Dendritic cell treated with granulocyte-macrophage colony-stimulating factor and Interleukin-4, amounts not matched to agents 40 ng/mL and 50 ng/mL, for 4 days (primary cell): ENCODE measurements at regions of chr12 and their contacts with region 1.

Region 1: DNA sequence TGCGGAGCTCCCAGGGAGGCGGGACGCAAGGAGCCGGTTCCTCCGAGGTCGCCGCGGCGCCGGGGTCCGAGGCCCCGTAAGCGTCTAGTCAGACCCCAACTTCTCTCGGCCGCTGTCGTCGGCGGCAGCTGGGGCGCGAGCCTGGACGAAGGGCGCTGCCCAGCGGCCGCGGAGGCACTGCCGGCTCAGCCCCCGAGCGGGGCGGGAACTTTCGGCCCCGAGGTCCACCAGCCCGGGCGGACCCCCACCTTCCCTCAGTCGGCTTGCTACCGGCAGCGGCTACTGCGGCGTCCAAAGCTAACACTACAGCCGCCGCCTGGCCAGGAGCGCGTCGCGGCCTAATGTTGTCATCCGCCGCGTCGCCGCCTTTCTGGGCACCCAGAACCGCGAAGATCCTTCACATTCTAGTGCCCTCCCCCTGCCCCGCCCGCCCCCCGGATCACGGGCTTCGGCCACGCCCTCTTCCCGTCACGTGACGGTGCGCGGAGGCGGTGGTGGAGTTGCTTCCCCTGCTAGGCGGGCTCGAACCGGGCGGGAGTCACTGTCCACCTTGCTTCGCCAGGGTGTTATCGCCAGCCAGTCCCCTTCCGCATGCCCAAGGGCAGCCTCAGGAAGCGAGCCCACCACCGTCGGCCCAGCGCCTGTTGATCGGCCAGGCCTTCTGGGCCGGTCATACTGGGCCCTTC is at the start of gene OSBPL8:
- H3K4me3 Mint-ChIP-seq: peak within 1 kb of the TSS; percentile 91
- H3K27ac Mint-ChIP-seq: peak within 1 kb of the TSS; percentile 96
- H3K4me1 Mint-ChIP-seq: peaks cover 29% of the 10 kb centered on the region
- H3K27me3 Mint-ChIP-seq: no peaks in the 10 kb centered on the region

Region 2: GRCh38 chr12:75305412-75306332 is 1253.9 kb before region 1 on chr12:
- intact Hi-C with region 1: no loop called
- H3K4me3 Mint-ChIP-seq: no peak overlapping the region
- H3K27ac Mint-ChIP-seq: no peak overlapping the region
- H3K4me1 Mint-ChIP-seq: no peaks in the 10 kb centered on the region
- H3K27me3 Mint-ChIP-seq: no peaks in the 10 kb centered on the region

Region 3: GRCh38 chr12:76083904-76084862 is 475.4 kb before region 1 on chr12 and contains the start of gene NAP1L1:
- intact Hi-C with region 1: loop called (anchors 10 kb)
- H3K4me3 Mint-ChIP-seq: peak within 1 kb of the TSS; percentile 92
- H3K27ac Mint-ChIP-seq: peak within 1 kb of the TSS; percentile 99
- H3K4me1 Mint-ChIP-seq: peaks cover 35% of the 10 kb centered on the region
- H3K27me3 Mint-ChIP-seq: no peaks in the 10 kb centered on the region

Region 4: GRCh38 chr12:76763743-76764675 is 204.5 kb after region 1 on chr12 and contains the start of gene ZDHHC17:
- intact Hi-C with region 1: loop called (anchors 2 kb)
- H3K4me3 Mint-ChIP-seq: peak within 1 kb of the TSS; percentile 94
- H3K27ac Mint-ChIP-seq: peak within 1 kb of the TSS; percentile 98
- H3K4me1 Mint-ChIP-seq: peaks cover 47% of the 10 kb centered on the region
- H3K27me3 Mint-ChIP-seq: no peaks in the 10 kb centered on the region

Region 5: GRCh38 chr12:77001181-77001758 is 441.7 kb after region 1 on chr12:
- intact Hi-C with region 1: no loop called
- H3K4me3 Mint-ChIP-seq: no peak overlapping the region
- H3K27ac Mint-ChIP-seq: no peak overlapping the region
- H3K4me1 Mint-ChIP-seq: no peaks in the 10 kb centered on the region
- H3K27me3 Mint-ChIP-seq: no peaks in the 10 kb centered on the region